ENCODE measurements at regions of chr6 and their contacts with region 1.

Region 1: GRCh38 chr6:151004415-151005024 is 139.0 kb downstream of the MTHFD1L start:
- DNase-seq: no peak
- ATAC-seq: peak; percentile 57
- H3K4me3 ChIP-seq: no peak overlapping the region
- H3K4me3 Mint-ChIP-seq: peak overlapping the region in 1 of 10 donors; percentile 21
- H3K27ac ChIP-seq: no peak overlapping the region
- H3K27ac Mint-ChIP-seq: peak overlapping the region in 3 of 9 donors; percentile 12 to 64 (median 30)
- H3K4me1 ChIP-seq: no peaks in the 10 kb centered on the region
- H3K4me1 Mint-ChIP-seq: peaks cover 0 to 32% (median 17%) of the 10 kb centered on the region in 7 donors
- H3K27me3 ChIP-seq: no peaks in the 10 kb centered on the region
- H3K27me3 Mint-ChIP-seq: no peaks in the 10 kb centered on the region

Region 2: DNA sequence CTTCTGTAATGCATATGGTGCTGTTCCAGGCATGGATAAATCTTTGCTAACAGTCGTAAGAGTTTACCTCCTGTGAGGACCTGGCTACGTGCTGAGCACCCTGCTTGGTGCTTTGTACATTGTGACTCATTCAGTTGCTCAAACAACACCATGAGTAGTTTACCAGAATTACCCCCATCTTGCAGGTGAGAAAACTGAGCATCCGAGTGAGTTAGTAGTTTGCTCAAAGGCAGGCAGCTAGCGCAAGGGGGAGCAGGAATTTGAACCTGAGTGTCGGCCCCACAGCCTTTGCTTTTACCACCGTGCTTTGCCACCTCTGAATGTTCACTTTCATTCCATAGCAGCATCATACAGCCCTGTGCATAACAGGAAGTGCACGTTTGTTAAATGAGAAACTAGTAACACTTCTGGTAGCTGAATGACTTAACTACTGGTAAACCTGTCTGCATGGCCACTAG is 17.1 kb before region 1 on chr6:
- CTCF ChIA-PET with region 1: no interaction called
- POLR2A ChIA-PET with region 1: no interaction called
- intact Hi-C with region 1: loop called in 1 of 2 experiments (anchors 2 kb)
- DNase-seq: peak in 4 of 9 donors; percentile 2 to 52 (median 6)
- ATAC-seq: peak; percentile 71
- H3K4me3 ChIP-seq: no peak overlapping the region
- H3K4me3 Mint-ChIP-seq: peak overlapping the region in 3 of 10 donors; percentile 39 to 80 (median 64)
- H3K27ac ChIP-seq: no peak overlapping the region
- H3K27ac Mint-ChIP-seq: peak overlapping the region in 3 of 9 donors; percentile 28 to 99 (median 48)
- H3K4me1 ChIP-seq: no peaks in the 10 kb centered on the region
- H3K4me1 Mint-ChIP-seq: peaks cover 0 to 20% (median 0%) of the 10 kb centered on the region in 7 donors
- H3K27me3 ChIP-seq: no peaks in the 10 kb centered on the region
- H3K27me3 Mint-ChIP-seq: no peaks in the 10 kb centered on the region

Region 3: GRCh38 chr6:151482290-151482689 is 477.8 kb after region 1 on chr6:
- CTCF ChIA-PET with region 1: no interaction called
- POLR2A ChIA-PET with region 1: no interaction called
- intact Hi-C with region 1: loop called in 1 of 2 experiments (anchors 10 kb)
- DNase-seq: peak in 1 of 9 donors; percentile 11
- ATAC-seq: peak; percentile 54
- H3K4me3 ChIP-seq: peak overlapping the region; percentile 51
- H3K4me3 Mint-ChIP-seq: peak overlapping the region; percentile 63 to 90 (median 83)
- H3K27ac ChIP-seq: peak overlapping the region; percentile 45
- H3K27ac Mint-ChIP-seq: peak overlapping the region; percentile 85 to 97 (median 93)
- H3K4me1 ChIP-seq: peaks cover 13% of the 10 kb centered on the region in 2 donors
- H3K4me1 Mint-ChIP-seq: peaks cover 6 to 19% (median 15%) of the 10 kb centered on the region in 7 donors
- H3K27me3 ChIP-seq: no peaks in the 10 kb centered on the region
- H3K27me3 Mint-ChIP-seq: no peaks in the 10 kb centered on the region

Measured in naive thymus-derived CD4-positive, alpha-beta T cell (primary cell).